Heart left ventricle (tissue), 16 donors: ENCODE measurements at regions of chr18 and their contacts with region 1.

Region 1: GRCh38 chr18:22267697-22268096 is 98.3 kb downstream of the GATA6 start:
- DNase-seq: peak; percentile 78 to 95 (median 86)
- ATAC-seq: peak; percentile 92 to 96 (median 92)
- H3K4me3 ChIP-seq: peak overlapping the region in 9 of 12 donors; percentile 34 to 61 (median 50)
- H3K27ac ChIP-seq: peak overlapping the region; percentile 77 to 99 (median 92)
- H3K4me1 ChIP-seq: peaks cover 0 to 33% (median 7%) of the 10 kb centered on the region in 12 donors
- H3K27me3 ChIP-seq: no peaks in the 10 kb centered on the region
- CTCF ChIP-seq: no peak
- POLR2A ChIP-seq: peak in 1 of 2 donors; percentile 31

Region 2: DNA sequence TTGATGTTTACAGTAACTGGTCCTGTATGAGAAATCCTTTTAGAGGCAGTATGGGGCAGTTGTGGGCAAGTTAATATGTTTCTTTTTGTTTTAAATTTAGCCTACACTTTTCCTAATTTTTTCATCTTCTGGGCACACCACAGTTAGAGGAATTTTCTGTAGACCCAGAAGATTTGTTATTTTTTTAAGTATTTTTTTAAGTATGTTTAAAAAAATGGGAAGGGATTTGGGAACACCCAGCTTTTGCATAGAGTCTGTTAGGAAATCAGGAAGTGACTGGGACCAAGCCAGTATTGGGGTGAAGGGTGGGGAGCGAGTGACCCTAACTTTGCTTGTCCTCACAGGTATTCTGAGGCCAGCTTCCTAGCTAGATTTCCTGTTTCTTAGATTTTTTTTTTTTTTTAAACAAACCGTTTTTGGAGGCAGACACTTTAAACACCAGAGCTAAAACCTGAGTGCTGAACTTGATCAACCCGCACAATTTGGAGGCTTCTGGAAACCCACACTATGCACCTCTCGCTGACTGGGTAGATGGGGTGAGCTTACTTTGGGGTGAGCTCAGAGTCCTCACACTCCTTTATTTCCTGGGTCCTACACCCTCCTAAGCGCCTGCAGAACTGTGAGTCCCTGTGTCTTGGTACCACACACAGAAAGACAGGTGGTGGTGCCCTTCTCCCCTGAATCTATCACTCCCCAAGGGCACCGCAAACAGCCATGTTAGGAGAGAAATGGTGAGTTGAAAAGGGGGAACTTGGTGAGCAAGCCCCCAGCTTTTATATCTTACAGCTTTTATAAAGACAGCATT is 93.2 kb before region 1 on chr18:
- intact Hi-C with region 1: loop called in 6 of 10 experiments (anchors 2 to 5 kb)
- DNase-seq: peak in 1 of 5 donors; percentile 49
- ATAC-seq: peak; percentile 23 to 58 (median 38)
- H3K4me3 ChIP-seq: peak overlapping the region; percentile 51 to 97 (median 84)
- H3K27ac ChIP-seq: peak overlapping the region; percentile 77 to 100 (median 97)
- H3K4me1 ChIP-seq: peaks cover 0 to 14% (median 4%) of the 10 kb centered on the region in 12 donors
- H3K27me3 ChIP-seq: peaks cover 0 to 54% (median 0%) of the 10 kb centered on the region in 9 donors
- CTCF ChIP-seq: peak in 2 of 12 donors; percentile 12 to 18
- POLR2A ChIP-seq: no peak

Region 3: DNA sequence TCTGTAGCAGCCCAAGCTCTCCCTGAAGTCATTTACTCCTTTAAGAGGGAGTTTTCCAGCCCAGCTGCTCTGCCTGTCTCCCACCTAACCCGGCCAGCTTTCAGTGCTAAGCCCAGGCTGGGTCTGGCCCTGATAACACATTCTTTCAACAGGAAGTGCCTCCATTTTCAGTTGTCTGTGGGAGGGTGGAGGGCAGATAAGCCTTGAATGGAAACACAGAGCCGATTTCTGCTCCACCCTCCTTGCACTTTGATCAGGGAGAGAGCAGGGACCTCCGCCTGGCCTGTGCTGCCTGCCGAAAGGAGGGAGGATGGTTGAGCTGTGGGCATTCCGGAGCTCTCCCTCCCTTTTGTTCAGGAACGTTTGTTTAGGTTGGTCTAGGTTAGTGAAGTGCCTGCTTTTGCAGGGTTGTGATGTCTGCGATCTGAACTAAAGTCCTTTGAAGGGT is 73.5 kb before region 1 on chr18:
- intact Hi-C with region 1: loop called in 5 of 10 experiments (anchors 5 kb)
- DNase-seq: peak in 3 of 5 donors; percentile 51 to 60 (median 55)
- ATAC-seq: peak; percentile 18 to 68 (median 50)
- H3K4me3 ChIP-seq: peak overlapping the region in 8 of 12 donors; percentile 3 to 40 (median 8)
- H3K27ac ChIP-seq: peak overlapping the region; percentile 11 to 100 (median 81)
- H3K4me1 ChIP-seq: peaks cover 8 to 98% (median 70%) of the 10 kb centered on the region in 12 donors
- H3K27me3 ChIP-seq: no peaks in the 10 kb centered on the region
- CTCF ChIP-seq: no peak
- POLR2A ChIP-seq: no peak

Region 4: DNA sequence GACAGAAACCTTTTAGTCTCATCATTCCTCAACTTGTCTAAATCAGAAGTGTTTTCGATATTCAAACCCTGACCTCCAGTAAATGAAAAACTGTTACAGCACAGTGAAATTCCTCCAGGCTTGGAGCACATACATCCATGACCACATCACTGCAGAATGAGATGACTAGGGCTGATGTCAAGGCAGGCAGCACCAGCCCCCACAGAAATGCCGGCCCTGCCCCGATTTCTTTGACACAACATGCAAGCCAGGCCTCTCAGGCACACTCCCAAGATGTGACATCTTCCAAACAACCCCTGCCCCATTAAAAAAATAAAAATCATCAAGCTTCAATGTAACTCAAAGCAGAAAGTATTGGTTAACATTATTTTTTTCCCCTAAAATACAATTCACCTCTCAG is 46.7 kb after region 1 on chr18:
- intact Hi-C with region 1: no loop called
- DNase-seq: peak in 2 of 5 donors; percentile 40 to 53
- ATAC-seq: peak in 2 of 4 donors; percentile 34 to 73
- H3K4me3 ChIP-seq: no peak overlapping the region
- H3K27ac ChIP-seq: peak overlapping the region in 1 of 12 donors; percentile 6
- H3K4me1 ChIP-seq: peaks cover 0 to 10% (median 0%) of the 10 kb centered on the region in 12 donors
- H3K27me3 ChIP-seq: no peaks in the 10 kb centered on the region
- CTCF ChIP-seq: no peak
- POLR2A ChIP-seq: no peak

Region 5: DNA sequence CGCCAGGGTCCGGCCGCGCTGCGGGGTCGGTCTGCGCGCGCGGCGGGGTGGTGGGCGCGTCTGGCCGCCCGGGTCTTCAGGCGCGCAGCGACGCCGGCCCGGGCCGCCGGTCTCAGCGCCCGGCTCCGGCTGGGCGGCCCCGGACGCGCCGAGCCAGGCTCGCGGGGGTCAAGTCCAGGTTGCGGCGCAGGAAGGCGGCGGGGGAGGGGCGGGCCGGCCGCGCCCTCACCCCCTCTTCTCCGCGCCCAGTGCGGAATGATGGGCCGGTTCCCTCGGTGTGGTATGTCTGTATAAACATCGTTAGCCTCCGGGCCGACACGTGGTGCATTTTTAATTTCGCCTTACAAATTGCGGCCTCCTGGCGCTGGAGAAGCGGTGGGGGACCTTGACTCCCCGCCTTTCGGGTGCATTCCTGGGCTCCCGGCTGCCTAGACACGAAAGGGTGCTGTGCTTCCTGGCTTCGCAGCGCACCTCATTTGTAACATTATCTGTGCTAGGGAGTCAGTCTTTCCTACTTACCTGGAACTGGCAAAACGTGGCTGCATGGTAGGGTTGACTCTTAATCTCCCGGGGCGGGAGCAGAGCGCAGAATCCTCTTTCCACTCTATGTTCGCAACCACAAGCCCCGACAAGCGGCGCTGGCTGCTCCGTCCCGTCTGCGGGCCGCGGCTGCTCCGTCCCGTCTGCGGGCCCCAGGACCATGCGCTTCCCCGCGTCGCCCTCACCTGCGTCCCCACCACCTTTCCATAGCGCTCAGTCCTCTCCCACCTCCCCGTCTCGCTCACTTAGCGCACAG is 81.0 kb after region 1 on chr18:
- intact Hi-C with region 1: loop called in 4 of 10 experiments (anchors 1 to 10 kb)
- DNase-seq: peak; percentile 78 to 87 (median 81)
- ATAC-seq: peak; percentile 54 to 73 (median 70)
- H3K4me3 ChIP-seq: peak overlapping the region; percentile 30 to 65 (median 60)
- H3K27ac ChIP-seq: peak overlapping the region; percentile 84 to 98 (median 92)
- H3K4me1 ChIP-seq: peaks cover 0 to 56% (median 39%) of the 10 kb centered on the region in 12 donors
- H3K27me3 ChIP-seq: peaks cover 0 to 27% (median 0%) of the 10 kb centered on the region in 9 donors
- CTCF ChIP-seq: peak in 1 of 12 donors; percentile 7
- POLR2A ChIP-seq: no peak

Region 6: DNA sequence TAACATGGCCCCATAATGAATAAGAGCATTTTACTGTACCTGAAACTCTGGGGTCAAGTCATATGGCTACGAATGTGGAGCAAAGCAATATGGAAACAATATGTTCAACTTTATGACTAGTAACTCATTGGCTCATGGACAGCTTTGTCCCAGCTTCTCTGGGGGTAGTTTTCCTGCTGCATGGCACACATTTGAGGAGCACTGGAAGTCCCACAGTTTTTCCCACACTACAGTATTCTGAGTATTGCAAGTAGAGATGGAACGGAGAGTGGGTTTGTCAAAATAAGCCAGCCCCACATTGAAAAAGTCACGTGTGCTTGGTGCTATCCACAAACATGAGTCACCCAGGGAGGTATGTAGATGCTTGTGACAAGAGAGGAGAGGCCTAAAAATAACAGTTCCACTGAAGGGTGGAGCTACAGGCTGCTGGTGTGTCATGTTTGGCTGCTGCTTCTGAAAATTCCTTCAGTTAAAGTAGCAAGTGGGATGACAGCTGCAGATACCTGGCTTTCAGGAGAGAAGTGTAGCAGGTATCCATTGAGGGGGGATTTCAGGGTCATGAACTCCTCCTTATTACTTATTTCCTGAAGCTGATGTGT is 198.3 kb after region 1 on chr18:
- intact Hi-C with region 1: loop called in 2 of 10 experiments (anchors 2 to 5 kb)
- DNase-seq: peak in 4 of 5 donors; percentile 51 to 71 (median 60)
- ATAC-seq: peak; percentile 92 to 94 (median 94)
- H3K4me3 ChIP-seq: peak overlapping the region in 1 of 12 donors; percentile 1
- H3K27ac ChIP-seq: peak overlapping the region; percentile 65 to 96 (median 86)
- H3K4me1 ChIP-seq: peaks cover 0 to 49% (median 34%) of the 10 kb centered on the region in 12 donors
- H3K27me3 ChIP-seq: no peaks in the 10 kb centered on the region
- CTCF ChIP-seq: no peak
- POLR2A ChIP-seq: peak in 1 of 2 donors; percentile 6